ENCODE measurements at regions of chr7 and their contacts with region 1.

Region 1: DNA sequence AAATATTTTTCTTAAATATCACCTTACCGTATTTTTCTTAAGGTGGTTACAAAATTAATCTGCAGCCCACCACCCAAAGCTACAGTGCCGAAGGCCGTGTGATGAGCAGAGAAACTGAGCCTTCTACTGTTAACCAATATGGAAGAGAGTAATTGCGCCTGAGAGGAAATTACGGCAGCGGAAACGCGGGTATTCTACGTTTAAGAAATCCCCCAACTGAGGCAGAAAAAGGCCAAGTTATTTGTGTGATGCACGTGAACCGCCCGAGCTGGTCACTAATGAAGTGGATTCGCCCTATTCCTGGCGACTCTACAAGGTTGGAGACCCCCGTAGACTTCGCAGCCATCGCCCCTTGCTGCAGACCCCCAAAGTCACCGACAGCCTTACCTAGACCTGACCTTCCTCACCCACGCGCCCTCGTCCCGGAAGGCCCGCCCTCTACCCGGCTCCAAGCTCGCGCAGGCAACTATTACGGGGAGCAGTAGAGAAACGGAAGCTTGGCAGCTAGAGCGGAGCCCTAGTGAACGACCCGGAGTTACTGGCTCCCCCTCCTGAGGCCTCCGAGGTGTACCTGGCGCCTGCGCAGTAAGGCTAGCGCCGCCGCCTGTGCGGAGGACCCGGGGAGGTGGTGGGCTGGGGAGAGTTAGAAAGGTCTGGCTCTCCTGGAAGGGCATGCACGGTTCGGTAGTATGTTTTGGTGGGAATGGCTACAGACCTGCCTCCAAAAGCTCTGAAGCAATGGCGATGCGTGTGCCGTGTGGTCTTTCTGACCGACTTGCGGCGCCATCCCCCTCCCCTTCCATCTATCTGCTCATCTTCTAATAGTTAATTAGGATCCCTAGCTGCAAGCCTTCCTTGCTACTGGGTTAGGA is at the start of gene MRPS33:
- DNase-seq: peak; percentile 88 to 98 (median 94)
- ATAC-seq: peak; percentile 96
- H3K4me3 ChIP-seq: peak within 1 kb of the TSS; percentile 71 to 80
- H3K4me3 Mint-ChIP-seq: peak within 1 kb of the TSS; percentile 100
- H3K27ac ChIP-seq: peak within 1 kb of the TSS; percentile 96 to 100
- H3K27ac Mint-ChIP-seq: peak within 1 kb of the TSS; percentile 100
- H3K4me1 ChIP-seq: peaks cover 17% of the 10 kb centered on the region
- H3K4me1 Mint-ChIP-seq: peaks cover 32% of the 10 kb centered on the region
- H3K27me3 ChIP-seq: no peaks in the 10 kb centered on the region
- H3K27me3 Mint-ChIP-seq: peaks cover 12% of the 10 kb centered on the region
- CTCF ChIP-seq: peak; percentile 45
- total RNA-seq, gene MRPS33: 17.4 to 19.9 TPM

Region 2: GRCh38 chr7:139340037-139340807 is 1674.5 kb before region 1 on chr7:
- CTCF ChIA-PET with region 1: interaction called, 5 read pairs
- POLR2A ChIA-PET with region 1: no interaction called
- intact Hi-C with region 1: loop called in 1 of 2 experiments (anchors 10 kb)
- DNase-seq: peak; percentile 95 to 100 (median 97)
- ATAC-seq: peak; percentile 80
- H3K4me3 ChIP-seq: peak overlapping the region; percentile 69 to 85
- H3K4me3 Mint-ChIP-seq: peak overlapping the region; percentile 98
- H3K27ac ChIP-seq: peak overlapping the region; percentile 94 to 98
- H3K27ac Mint-ChIP-seq: peak overlapping the region; percentile 100
- H3K4me1 ChIP-seq: peaks cover 13% of the 10 kb centered on the region
- H3K4me1 Mint-ChIP-seq: peaks cover 32% of the 10 kb centered on the region
- H3K27me3 ChIP-seq: no peaks in the 10 kb centered on the region
- H3K27me3 Mint-ChIP-seq: peaks cover 2% of the 10 kb centered on the region
- CTCF ChIP-seq: peak; percentile 36

Region 3: GRCh38 chr7:140230861-140231770 is 783.6 kb before region 1 on chr7:
- CTCF ChIA-PET with region 1: no interaction called
- POLR2A ChIA-PET with region 1: no interaction called
- intact Hi-C with region 1: loop called in 1 of 2 experiments (anchors 10 kb)
- DNase-seq: peak in 8 of 9 experiments; percentile 25 to 80 (median 62)
- ATAC-seq: peak; percentile 19
- H3K4me3 ChIP-seq: peak overlapping the region; percentile 73
- H3K4me3 Mint-ChIP-seq: peak overlapping the region; percentile 92
- H3K27ac ChIP-seq: peak overlapping the region; percentile 83 to 85
- H3K27ac Mint-ChIP-seq: peak overlapping the region; percentile 100
- H3K4me1 ChIP-seq: peaks cover 25% of the 10 kb centered on the region
- H3K4me1 Mint-ChIP-seq: peaks cover 40% of the 10 kb centered on the region
- H3K27me3 ChIP-seq: no peaks in the 10 kb centered on the region
- H3K27me3 Mint-ChIP-seq: no peaks in the 10 kb centered on the region
- CTCF ChIP-seq: no peak

Region 4: GRCh38 chr7:140517546-140518369 is 497.0 kb before region 1 on chr7:
- CTCF ChIA-PET with region 1: no interaction called
- POLR2A ChIA-PET with region 1: no interaction called
- intact Hi-C with region 1: loop called in 1 of 2 experiments (anchors 2 kb)
- DNase-seq: peak; percentile 16 to 79 (median 69)
- ATAC-seq: peak; percentile 62
- H3K4me3 ChIP-seq: no peak overlapping the region
- H3K4me3 Mint-ChIP-seq: no peak overlapping the region
- H3K27ac ChIP-seq: no peak overlapping the region
- H3K27ac Mint-ChIP-seq: no peak overlapping the region
- H3K4me1 ChIP-seq: no peaks in the 10 kb centered on the region
- H3K4me1 Mint-ChIP-seq: peaks cover 4% of the 10 kb centered on the region
- H3K27me3 ChIP-seq: no peaks in the 10 kb centered on the region
- H3K27me3 Mint-ChIP-seq: peaks cover 9% of the 10 kb centered on the region
- CTCF ChIP-seq: peak; percentile 28

Region 5: DNA sequence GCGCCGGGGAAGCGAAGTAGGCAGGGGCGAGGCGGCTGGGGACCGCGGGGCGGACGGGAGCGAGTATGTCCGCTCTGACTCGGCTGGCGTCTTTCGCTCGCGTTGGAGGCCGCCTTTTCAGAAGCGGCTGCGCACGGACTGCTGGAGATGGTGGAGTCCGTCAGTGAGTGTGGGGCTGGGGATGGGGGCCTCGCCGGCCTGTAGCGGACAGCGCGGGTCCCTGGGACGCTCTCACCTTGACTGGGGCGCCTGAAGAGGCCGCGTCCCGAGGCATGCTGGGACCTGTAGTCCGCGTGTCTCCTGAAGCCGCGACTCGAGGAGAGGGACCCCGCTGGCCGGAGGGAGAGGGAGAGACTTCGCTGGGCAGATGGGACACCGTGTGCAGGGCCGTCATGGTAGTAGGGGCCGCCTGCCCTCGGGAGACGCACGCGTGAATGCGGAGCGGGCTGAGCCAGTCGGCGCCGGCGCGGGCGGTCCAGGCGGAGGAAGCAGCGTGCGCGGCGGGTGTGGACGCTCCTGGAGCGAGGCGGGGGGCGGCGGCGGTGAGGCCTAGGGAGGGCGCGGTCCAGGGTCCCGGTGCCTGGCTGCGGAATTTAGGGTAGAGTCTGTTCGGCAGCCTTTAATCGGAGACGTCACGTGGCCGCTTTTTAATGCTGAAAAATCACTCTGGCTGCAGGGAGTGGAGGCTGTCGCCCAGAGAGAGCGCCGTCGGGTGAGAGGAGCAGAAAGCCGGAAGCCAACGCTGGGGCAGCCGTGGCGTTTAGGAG is 317.9 kb before region 1 on chr7 and contains the start of gene NDUFB2:
- CTCF ChIA-PET with region 1: interaction called, 4 read pairs
- POLR2A ChIA-PET with region 1: interaction called, 6 read pairs
- intact Hi-C with region 1: loop called (anchors 1 kb)
- DNase-seq: peak in 8 of 9 experiments; percentile 30 to 85 (median 64)
- ATAC-seq: peak; percentile 87
- H3K4me3 ChIP-seq: peak within 1 kb of the TSS; percentile 96 to 100
- H3K4me3 Mint-ChIP-seq: peak within 1 kb of the TSS; percentile 97
- H3K27ac ChIP-seq: peak within 1 kb of the TSS; percentile 96
- H3K27ac Mint-ChIP-seq: peak within 1 kb of the TSS; percentile 99
- H3K4me1 ChIP-seq: peaks cover 19% of the 10 kb centered on the region
- H3K4me1 Mint-ChIP-seq: peaks cover 45% of the 10 kb centered on the region
- H3K27me3 ChIP-seq: no peaks in the 10 kb centered on the region
- H3K27me3 Mint-ChIP-seq: no peaks in the 10 kb centered on the region
- CTCF ChIP-seq: no peak
- total RNA-seq, gene NDUFB2: 83.9 to 84.5 TPM

Region 6: GRCh38 chr7:140924019-140924820 is 90.5 kb before region 1 on chr7:
- CTCF ChIA-PET with region 1: no interaction called
- POLR2A ChIA-PET with region 1: interaction called, 11 read pairs
- intact Hi-C with region 1: loop called (anchors 1 kb)
- DNase-seq: peak; percentile 55 to 95 (median 75)
- ATAC-seq: peak; percentile 65
- H3K4me3 ChIP-seq: peak overlapping the region; percentile 93
- H3K4me3 Mint-ChIP-seq: no peak overlapping the region
- H3K27ac ChIP-seq: peak overlapping the region; percentile 96 to 97
- H3K27ac Mint-ChIP-seq: no peak overlapping the region
- H3K4me1 ChIP-seq: peaks cover 13% of the 10 kb centered on the region
- H3K4me1 Mint-ChIP-seq: peaks cover 15% of the 10 kb centered on the region
- H3K27me3 ChIP-seq: no peaks in the 10 kb centered on the region
- H3K27me3 Mint-ChIP-seq: no peaks in the 10 kb centered on the region
- CTCF ChIP-seq: no peak

Measured in CD8-positive, alpha-beta T cell (primary cell).